H1 (cell line): ENCODE measurements at regions of chr15 and their contacts with region 1.

Region 1: DNA sequence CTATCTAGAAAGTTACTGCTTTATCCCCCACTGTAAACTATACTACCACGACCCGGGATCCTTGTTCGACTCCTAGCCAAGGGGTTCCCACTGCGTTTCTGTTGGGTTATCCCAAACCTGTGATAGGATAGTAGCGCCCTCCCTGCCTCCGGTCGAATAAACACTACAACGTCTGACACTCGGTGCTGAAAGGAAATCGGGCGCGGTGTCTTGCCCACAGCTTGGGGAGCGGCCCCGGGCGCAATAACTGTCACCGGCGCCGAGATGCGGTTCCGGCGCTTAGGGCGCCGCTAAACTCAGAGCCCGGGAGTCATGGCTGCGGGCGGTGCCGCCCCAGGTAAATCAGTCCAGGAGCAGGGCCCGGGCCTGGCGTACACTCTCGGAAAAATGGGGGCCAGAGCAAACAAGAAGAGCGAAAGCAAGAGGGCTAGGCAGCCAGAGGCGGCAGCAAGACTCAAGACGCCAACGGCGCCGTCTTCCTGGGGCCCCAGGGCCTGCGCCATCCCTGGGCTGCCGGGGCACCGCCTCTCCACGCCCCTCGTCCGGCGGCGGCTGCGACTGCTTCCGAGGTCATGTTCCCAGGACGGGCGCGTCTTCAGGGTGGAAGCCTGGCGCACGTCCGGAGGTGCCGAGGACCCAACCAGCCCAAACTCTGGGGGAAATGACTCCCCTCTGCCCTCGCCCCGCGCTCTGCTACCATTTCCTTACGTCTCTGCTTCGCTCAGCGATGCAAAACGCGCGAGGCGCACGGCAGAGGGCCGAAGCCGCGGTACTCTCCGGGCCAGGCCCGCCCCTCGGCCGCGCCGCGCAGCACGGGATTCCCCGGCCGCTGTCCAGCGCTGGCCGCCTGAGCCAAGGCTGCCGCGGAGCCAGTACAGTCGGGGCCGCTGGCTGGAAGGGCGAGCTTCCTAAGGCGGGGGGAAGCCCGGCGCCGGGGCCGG is at the start of gene DUT:
- DNase-seq: peak in 1 of 2 experiments; percentile 84
- H3K4me3 ChIP-seq: peak within 1 kb of the TSS; percentile 88 to 99 (median 91)
- H3K27ac ChIP-seq: peak within 1 kb of the TSS; percentile 97
- H3K4me1 ChIP-seq: peaks cover 3 to 5% (median 4%) of the 10 kb centered on the region in 4 experiments; a peak in 5 of 7 replicates
- H3K27me3 ChIP-seq: no peaks in the 10 kb centered on the region
- CTCF ChIP-seq: peak in 2 of 3 experiments; percentile 15 to 27; a peak in 2 of 4 replicates
- EP300 ChIP-seq: no peak
- POLR2A ChIP-seq: no peak; a peak in 2 of 3 replicates
- RAD21 ChIP-seq: peak; percentile 35 to 48; a peak in 3 of 4 replicates
- total RNA-seq, gene DUT: 246 and 259 TPM in 2 replicates

Region 2: DNA sequence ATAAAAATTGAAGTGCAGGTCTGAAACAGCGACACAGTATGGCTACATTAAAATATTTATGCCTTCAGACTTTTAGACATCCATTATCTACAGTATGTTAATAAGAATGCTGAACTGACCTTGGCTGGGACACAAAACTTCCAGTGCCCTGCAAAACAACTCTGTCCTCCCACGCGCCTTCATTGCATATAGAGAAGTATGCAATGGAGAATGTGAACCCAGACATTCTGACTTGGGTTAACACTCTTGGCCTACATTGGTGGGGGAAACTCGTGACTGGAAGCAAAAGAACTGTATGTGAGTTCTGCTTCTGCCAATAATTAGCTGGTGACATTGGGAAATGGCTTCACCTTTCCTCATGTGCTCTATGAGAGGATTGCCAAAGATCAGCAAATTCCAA is 320.8 kb before region 1 on chr15:
- CTCF ChIA-PET with region 1: no interaction called
- POLR2A ChIA-PET with region 1: no interaction called
- DNase-seq: no peak
- H3K4me3 ChIP-seq: no peak overlapping the region
- H3K27ac ChIP-seq: no peak overlapping the region
- H3K4me1 ChIP-seq: peaks cover 0 to 7% (median 3%) of the 10 kb centered on the region in 4 experiments; a peak in 3 of 7 replicates
- H3K27me3 ChIP-seq: no peaks in the 10 kb centered on the region
- CTCF ChIP-seq: no peak
- EP300 ChIP-seq: no peak
- POLR2A ChIP-seq: no peak
- RAD21 ChIP-seq: no peak

Region 3: DNA sequence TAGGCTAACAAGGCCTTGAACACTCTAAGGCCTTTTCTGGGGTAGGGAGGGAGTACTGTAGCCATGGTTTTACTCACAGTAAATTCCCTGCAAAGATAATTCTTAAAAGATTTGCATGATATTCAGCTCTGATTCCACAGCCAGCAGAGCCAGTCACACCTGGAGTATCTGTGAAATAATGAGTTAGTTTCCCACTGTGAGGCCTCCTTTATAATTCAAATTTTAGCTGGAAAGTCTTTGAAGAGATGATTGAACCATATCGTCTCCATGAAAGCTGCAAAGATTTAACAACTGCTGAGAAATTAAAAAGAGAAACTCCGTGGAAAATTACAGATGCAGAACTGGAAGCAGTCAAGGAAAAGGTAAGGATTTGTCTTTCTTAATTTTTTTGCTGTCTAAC is 32.2 kb before region 1 on chr15:
- CTCF ChIA-PET with region 1: interaction called, 41 read pairs
- POLR2A ChIA-PET with region 1: interaction called, 9 read pairs
- DNase-seq: no peak
- H3K4me3 ChIP-seq: peak overlapping the region in 1 of 4 experiments; percentile 40; a peak in 2 of 8 replicates
- H3K27ac ChIP-seq: no peak overlapping the region
- H3K4me1 ChIP-seq: peaks cover 6 to 21% (median 17%) of the 10 kb centered on the region in 4 experiments; a peak in 6 of 7 replicates
- H3K27me3 ChIP-seq: no peaks in the 10 kb centered on the region
- CTCF ChIP-seq: no peak
- EP300 ChIP-seq: peak in 1 of 2 experiments; percentile 78; a peak in 1 of 3 replicates
- POLR2A ChIP-seq: no peak
- RAD21 ChIP-seq: no peak